Aorta (tissue), 5 donors: ENCODE measurements at regions of chr18 and their contacts with region 1.

Region 1: GRCh38 chr18:10525371-10526210 is at the start of gene NAPG:
- DNase-seq: peak; percentile 96 to 97
- ATAC-seq: peak; percentile 97
- H3K4me3 ChIP-seq: peak within 1 kb of the TSS; percentile 81 to 83
- H3K27ac ChIP-seq: peak within 1 kb of the TSS; percentile 38 to 53
- H3K4me1 ChIP-seq: peaks cover 0 to 6% of the 10 kb centered on the region in 2 donors
- H3K27me3 ChIP-seq: no peaks in the 10 kb centered on the region
- total RNA-seq, gene NAPG: 36.0 to 49.7 TPM

Region 2: GRCh38 chr18:9683407-9684396 is 841.9 kb before region 1 on chr18:
- intact Hi-C with region 1: loop called in 1 of 2 experiments (anchors 10 kb)
- DNase-seq: peak in 1 of 2 donors; percentile 58
- ATAC-seq: peak; percentile 81
- H3K4me3 ChIP-seq: no peak overlapping the region
- H3K27ac ChIP-seq: peak overlapping the region; percentile 59 to 85
- H3K4me1 ChIP-seq: peaks cover 0 to 3% of the 10 kb centered on the region in 2 donors
- H3K27me3 ChIP-seq: no peaks in the 10 kb centered on the region

Region 3: DNA sequence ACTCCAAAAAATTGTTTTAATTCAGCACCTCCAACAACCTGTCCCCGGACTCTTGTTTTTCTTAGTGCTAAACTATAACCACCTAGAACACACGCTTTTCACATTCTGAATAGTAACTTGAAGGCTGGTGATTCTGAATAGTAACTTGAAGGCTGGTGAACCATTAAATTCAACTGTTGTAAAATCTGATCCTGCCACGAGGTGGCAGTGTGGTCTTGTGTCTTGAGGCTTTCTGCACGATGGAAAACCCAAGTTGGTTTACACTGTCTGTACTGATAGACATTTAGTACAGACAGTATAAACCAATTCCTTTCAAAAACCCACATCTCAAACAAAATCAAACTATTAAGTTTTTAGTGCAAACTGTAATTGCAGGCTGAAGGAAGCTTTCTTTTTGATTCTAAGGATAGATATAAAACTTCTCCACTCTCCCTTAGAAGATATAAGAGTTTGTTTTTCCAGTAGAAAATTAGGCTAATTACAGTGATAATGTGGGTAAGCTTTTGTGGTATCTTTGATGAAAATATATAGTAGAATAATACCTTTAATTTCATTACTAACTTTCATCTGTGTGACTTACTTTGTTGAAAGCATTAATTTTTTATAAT is 554.2 kb before region 1 on chr18:
- intact Hi-C with region 1: loop called (anchors 2 kb)
- DNase-seq: peak in 1 of 2 donors; percentile 68
- ATAC-seq: peak; percentile 85
- H3K4me3 ChIP-seq: no peak overlapping the region
- H3K27ac ChIP-seq: no peak overlapping the region
- H3K4me1 ChIP-seq: no peaks in the 10 kb centered on the region
- H3K27me3 ChIP-seq: no peaks in the 10 kb centered on the region

Region 4: GRCh38 chr18:10378688-10379363 is 146.8 kb before region 1 on chr18:
- intact Hi-C with region 1: no loop called
- DNase-seq: no peak
- ATAC-seq: no peak
- H3K4me3 ChIP-seq: no peak overlapping the region
- H3K27ac ChIP-seq: no peak overlapping the region
- H3K4me1 ChIP-seq: no peaks in the 10 kb centered on the region
- H3K27me3 ChIP-seq: no peaks in the 10 kb centered on the region

Region 5: DNA sequence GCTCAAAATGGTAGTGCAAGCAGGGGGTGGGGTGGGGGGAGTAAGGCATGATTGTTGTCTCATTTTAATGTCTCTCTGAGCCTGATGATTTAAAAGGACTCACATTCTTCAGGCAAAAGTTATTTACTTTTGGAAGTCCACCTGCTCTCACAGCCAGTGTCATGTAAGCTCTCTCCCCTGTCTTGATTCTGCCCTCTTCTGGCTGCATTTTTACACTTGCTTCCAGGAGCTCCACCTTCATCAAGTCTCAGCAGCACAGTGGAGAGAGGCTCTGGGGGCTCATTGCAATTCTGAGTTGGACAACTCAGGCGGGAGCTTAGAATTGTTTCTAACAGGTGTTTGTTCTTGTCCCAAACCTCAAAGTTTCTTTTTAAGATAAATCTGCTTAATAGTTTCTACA is 1202.7 kb after region 1 on chr18:
- intact Hi-C with region 1: no loop called
- DNase-seq: no peak
- ATAC-seq: no peak
- H3K4me3 ChIP-seq: no peak overlapping the region
- H3K27ac ChIP-seq: no peak overlapping the region
- H3K4me1 ChIP-seq: no peaks in the 10 kb centered on the region
- H3K27me3 ChIP-seq: no peaks in the 10 kb centered on the region